GM10248 (cell line): ENCODE measurements at regions of chr12 and their contacts with region 1.

Region 1: GRCh38 chr12:57621497-57622292 is 10.5 kb downstream of the ARHGEF25 start:
- DNase-seq: peak; percentile 83
- CTCF ChIP-seq: peak; percentile 95

Region 2: DNA sequence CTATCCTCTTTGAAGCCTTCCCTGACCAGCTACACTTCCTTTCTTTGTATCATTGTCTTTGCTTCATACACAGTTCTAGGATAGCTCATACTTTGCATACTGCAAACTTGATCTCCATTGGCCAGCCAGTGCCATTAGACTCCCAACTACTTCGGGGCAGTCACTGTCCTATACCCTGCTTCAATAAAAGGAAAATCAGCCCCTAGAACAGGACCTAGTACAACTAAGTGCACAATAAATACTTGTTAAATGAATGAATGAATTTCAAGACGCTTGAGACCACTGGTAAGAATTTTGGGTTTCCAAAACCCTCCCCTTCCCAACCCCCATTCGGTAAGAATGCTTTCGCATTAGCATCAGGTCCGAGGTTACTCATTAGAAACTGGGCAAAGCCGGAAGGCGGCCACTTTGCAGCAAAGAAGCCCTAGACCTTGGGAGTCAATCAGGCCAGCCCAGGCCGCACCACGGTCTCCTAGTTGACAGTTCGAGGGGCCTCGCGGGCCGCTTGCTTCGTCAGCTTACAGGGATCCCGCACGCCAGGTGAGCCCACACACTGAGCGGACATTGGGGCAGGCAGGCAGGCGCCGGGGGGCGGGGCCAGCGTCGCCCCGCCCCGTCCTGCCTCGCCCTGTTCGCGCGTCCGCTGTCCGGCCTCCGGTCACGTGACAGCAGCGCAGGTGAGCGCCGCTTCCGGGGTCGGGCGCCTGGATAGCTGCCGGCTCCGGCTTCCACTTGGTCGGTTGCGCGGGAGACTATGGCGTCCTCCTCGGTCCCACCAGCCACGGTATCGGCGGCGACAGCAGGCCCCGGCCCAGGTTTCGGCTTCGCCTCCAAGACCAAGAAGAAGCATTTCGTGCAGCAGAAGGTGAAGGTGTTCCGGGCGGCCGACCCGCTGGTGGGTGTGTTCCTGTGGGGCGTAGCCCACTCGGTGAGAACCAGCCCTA is 30.9 kb before region 1 on chr12 and contains the start of gene PIP4K2C:
- CTCF ChIA-PET with region 1: interaction called, 155 read pairs
- POLR2A ChIA-PET with region 1: interaction called, 6 read pairs
- DNase-seq: peak; percentile 97
- CTCF ChIP-seq: no peak

Region 3: GRCh38 chr12:57604454-57604991 is 17.2 kb before region 1 on chr12 and contains the start of gene DTX3:
- CTCF ChIA-PET with region 1: interaction called, 20 read pairs
- POLR2A ChIA-PET with region 1: no interaction called
- DNase-seq: peak; percentile 77
- CTCF ChIP-seq: no peak

Region 4: GRCh38 chr12:57611108-57611809 is 10.4 kb before region 1 on chr12 and contains the start of gene ARHGEF25:
- CTCF ChIA-PET with region 1: interaction called, 20 read pairs
- POLR2A ChIA-PET with region 1: no interaction called
- DNase-seq: peak; percentile 84
- CTCF ChIP-seq: no peak

Region 5: DNA sequence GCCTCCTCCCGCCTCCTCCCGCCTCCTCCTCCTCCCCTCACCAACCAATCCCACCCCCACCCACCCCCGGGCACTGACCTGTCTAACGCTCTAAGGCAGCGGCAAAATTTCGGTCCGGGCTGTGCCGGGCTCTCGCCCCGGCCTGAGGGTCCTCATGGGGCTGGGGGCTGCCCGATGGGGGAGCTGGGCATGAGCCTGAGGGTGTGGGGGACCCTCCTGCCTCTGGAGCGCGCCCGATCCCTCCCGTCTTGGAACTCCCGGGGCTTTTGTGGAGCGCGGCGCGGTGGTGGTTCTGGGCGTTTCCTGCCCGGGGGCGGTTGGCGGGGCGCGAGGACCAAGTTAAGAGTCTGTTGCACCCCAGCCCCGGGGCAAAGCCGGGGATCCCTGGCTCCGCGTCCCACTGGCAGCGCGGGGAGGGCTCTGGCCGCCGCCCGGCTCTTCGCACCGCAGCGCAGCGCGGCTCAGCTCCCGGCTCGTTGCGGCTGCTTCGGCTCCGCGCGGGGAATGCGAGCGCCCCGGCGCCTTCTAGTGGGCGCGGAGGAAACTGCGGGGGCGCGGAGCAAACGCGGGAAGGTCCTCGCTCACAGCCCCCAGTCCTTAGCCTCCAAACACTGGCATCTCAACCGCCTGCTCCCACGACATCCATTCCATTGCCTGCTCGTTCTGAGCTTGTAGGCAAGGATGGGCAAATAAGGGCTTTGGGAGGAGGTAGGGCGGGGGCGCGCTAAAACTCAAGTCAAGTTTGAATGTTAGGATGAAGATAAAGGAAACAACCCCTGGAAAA is 11.2 kb after region 1 on chr12 and contains the start of gene B4GALNT1:
- CTCF ChIA-PET with region 1: interaction called, 20 read pairs
- POLR2A ChIA-PET with region 1: no interaction called
- DNase-seq: peak; percentile 85
- CTCF ChIP-seq: peak; percentile 86

Region 6: DNA sequence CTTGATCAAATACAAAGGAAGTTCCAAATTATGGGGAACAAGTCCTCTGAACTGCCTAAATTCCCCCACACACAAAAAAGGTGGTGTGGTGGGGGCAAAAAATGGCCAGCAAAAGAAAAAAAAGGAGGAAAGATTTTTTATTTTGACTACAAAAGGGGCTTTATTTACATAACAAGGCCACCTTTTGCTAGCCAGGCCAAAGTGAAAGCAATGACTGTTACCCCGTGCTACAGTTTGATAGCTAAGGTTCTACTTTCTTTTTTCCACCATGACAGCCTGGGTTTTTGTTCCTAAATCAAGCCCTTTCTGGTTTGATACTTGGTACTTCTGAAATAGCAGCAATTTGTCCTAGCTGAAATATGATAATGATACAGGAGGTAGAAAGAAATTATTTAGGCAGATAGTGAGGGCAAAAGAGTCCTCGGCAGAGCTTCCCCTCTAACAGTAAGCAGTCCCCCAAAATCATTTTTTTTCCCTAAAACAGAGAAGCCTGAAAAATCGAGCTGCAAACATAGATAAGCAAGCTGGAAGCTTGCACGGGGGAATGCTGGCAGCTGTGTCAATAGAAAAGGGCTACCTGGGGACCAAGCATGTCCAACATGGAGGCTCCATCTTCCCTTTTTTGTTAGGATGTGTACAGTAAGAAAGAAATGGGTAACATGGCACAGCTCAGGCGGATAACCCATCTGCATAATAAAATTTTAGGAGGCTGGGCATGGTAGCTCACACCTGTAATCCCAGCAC is 20.2 kb after region 1 on chr12:
- CTCF ChIA-PET with region 1: interaction called, 12 read pairs
- POLR2A ChIA-PET with region 1: no interaction called
- DNase-seq: no peak
- CTCF ChIP-seq: no peak

Region 7: DNA sequence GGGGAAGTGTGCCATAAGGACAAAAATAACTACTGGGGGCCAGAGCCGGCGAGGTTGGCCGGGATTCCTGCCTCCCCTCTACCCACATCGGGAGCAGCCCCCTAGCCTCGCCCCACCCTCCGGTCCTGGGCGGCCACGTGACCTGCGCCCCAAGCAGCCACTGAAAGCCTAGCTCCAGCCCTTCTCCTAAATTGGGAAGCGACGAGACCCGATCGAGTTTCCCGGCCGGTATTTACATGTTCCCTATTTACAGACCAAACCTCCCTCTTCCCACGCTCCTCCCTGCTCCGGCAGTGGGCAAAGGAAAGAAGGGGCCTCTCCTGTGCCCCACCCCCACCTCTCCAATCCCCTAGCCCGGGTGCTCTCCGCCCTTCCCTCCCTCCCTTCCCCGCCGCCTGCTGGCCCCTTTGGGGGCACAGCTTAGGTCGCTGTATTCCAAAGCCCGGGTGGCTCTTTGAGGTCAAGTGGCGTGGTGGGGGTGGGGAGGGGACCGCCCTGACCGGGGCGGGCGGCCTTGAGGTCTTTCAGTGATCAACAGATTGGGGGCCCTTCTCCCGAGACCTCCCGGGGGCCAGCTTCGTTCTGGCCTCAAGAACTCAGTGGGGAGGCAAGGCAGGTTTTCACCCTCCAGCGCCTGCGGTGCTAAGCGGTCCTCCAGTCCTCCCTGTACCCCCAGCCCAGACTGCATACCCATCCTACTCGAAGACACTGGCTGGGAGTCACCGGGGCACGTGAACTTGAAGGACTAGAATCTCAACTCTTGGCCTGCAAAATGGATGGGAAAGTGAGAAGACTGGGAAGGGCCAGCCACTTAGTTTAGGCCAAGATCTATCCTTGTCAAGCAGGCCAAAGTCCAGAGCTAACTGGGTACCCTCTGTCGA is 231.2 kb after region 1 on chr12:
- CTCF ChIA-PET with region 1: no interaction called
- POLR2A ChIA-PET with region 1: no interaction called
- DNase-seq: no peak
- CTCF ChIP-seq: no peak